ENCODE measurements at regions of chrX and their contacts with region 1.

Region 1: GRCh38 chrX:49922291-49923241 is at the start of gene CLCN5:
- DNase-seq: peak; percentile 90 to 96
- ATAC-seq: peak; percentile 89 to 90
- H3K4me3 ChIP-seq: peak within 1 kb of the TSS; percentile 74 to 95 (median 82)
- H3K27ac ChIP-seq: peak within 1 kb of the TSS; percentile 85 to 94 (median 92)
- H3K4me1 ChIP-seq: peaks cover 4 to 17% of the 10 kb centered on the region in 2 donors
- H3K27me3 ChIP-seq: no peaks in the 10 kb centered on the region
- CTCF ChIP-seq: no peak
- POLR2A ChIP-seq: peak; percentile 63 to 76
- total RNA-seq, gene CLCN5: 2.7 to 13.1 (median 6.8) TPM

Region 2: GRCh38 chrX:49884290-49884862 is 38.2 kb before region 1 on chrX:
- in situ Hi-C with region 1: no loop called
- intact Hi-C with region 1: loop called (anchors 5 kb)
- DNase-seq: peak in 1 of 2 donors; percentile 15
- ATAC-seq: peak in 1 of 2 donors; percentile 41
- H3K4me3 ChIP-seq: no peak overlapping the region
- H3K27ac ChIP-seq: no peak overlapping the region
- H3K4me1 ChIP-seq: peaks cover 0 to 2% of the 10 kb centered on the region in 2 donors
- H3K27me3 ChIP-seq: no peaks in the 10 kb centered on the region
- CTCF ChIP-seq: peak; percentile 13 to 69 (median 43)
- POLR2A ChIP-seq: no peak

Region 3: DNA sequence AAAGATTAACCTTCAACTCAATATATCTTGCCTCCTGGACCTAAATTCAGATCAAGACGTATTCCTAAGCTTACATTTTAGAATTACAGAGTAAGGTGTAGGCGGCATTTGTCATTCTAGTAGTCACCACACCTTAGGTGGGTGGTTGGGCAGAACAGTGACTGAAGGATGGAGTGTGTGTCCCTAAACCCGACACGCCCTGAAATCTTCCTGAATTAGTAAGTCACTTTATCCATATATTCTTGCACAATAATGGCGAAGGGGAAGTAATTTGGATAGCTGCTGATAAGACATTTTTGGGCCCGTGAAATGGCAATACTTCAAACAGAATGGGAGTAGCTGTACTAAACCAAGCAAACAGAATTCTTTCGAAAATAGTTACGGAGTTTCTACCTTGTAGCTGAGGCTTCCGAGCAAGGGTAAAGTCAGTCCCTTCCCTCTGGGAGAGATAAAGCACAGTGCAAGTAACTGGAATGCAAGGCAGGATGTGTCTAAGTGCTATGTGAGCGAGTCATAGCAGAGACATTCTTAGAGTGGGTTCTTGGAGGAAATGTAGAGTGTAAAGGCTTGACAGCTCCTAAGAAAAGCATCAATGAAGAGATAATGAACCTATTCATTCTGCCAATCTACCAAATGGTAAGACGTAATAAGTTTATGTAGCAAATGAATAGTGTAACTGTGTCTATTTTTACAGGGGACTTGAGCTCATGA is 72.6 kb after region 1 on chrX:
- in situ Hi-C with region 1: no loop called
- intact Hi-C with region 1: loop called (anchors 10 kb)
- DNase-seq: no peak
- ATAC-seq: no peak
- H3K4me3 ChIP-seq: no peak overlapping the region
- H3K27ac ChIP-seq: peak overlapping the region in 3 of 4 donors; percentile 23 to 27 (median 26)
- H3K4me1 ChIP-seq: peaks cover 4 to 10% of the 10 kb centered on the region in 2 donors
- H3K27me3 ChIP-seq: no peaks in the 10 kb centered on the region
- CTCF ChIP-seq: no peak
- POLR2A ChIP-seq: no peak

Region 4: GRCh38 chrX:50081282-50081889 is 158.8 kb after region 1 on chrX:
- in situ Hi-C with region 1: loop called in 2 of 4 experiments (anchors 10 to 25 kb)
- intact Hi-C with region 1: no loop called
- DNase-seq: peak; percentile 2 to 23
- ATAC-seq: peak in 1 of 2 donors; percentile 46
- H3K4me3 ChIP-seq: no peak overlapping the region
- H3K27ac ChIP-seq: no peak overlapping the region
- H3K4me1 ChIP-seq: no peaks in the 10 kb centered on the region
- H3K27me3 ChIP-seq: no peaks in the 10 kb centered on the region
- CTCF ChIP-seq: peak in 1 of 5 experiments; percentile 44
- POLR2A ChIP-seq: no peak

Region 5: GRCh38 chrX:50579955-50580354 is 657.4 kb after region 1 on chrX:
- in situ Hi-C with region 1: loop called in 3 of 4 experiments (anchors 25 kb)
- intact Hi-C with region 1: loop called (anchors 5 kb)
- DNase-seq: no peak
- ATAC-seq: no peak
- H3K4me3 ChIP-seq: no peak overlapping the region
- H3K27ac ChIP-seq: no peak overlapping the region
- H3K4me1 ChIP-seq: no peaks in the 10 kb centered on the region
- H3K27me3 ChIP-seq: no peaks in the 10 kb centered on the region
- CTCF ChIP-seq: peak in 3 of 5 experiments; percentile 26 to 54 (median 30)
- POLR2A ChIP-seq: no peak

Measured in gastrocnemius medialis (tissue), 4 donors.